Activated CD8-positive, alpha-beta T cell treated with anti-CD3 and anti-CD28 coated beads for 36 hours (primary cell): ENCODE measurements at regions of chr9 and their contacts with region 1.

Region 1: DNA sequence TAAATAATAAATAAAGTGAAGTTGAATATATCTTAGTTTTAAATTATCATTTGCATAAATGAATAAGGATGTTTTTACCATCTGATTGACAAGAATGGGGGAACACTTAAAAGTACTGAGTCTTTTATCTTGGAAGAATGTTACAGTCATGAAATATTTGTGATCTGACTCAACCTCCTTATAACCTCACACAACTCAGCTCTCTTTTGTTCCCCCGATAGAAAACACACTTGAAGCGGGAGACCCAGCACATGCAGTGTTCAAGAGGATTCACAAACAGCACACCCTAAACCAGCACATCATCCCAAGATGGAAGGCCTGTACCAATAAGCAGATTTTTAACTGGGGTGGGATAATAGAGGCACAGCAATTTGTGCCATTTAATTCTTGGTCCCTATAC is 15.5 kb downstream of the BAAT start:
- DNase-seq: no peak
- ATAC-seq: no peak
- H3K4me3 Mint-ChIP-seq: no peak overlapping the region
- H3K27ac Mint-ChIP-seq: no peak overlapping the region
- H3K4me1 Mint-ChIP-seq: no peaks in the 10 kb centered on the region
- H3K27me3 Mint-ChIP-seq: peaks cover 7% of the 10 kb centered on the region
- CTCF ChIP-seq: no peak

Region 2: GRCh38 chr9:101387871-101388506 is 18.7 kb after region 1 on chr9:
- CTCF ChIA-PET with region 1: interaction called, 14 read pairs
- POLR2A ChIA-PET with region 1: no interaction called
- intact Hi-C with region 1: no loop called
- DNase-seq: no peak
- ATAC-seq: peak; percentile 64
- H3K4me3 Mint-ChIP-seq: no peak overlapping the region
- H3K27ac Mint-ChIP-seq: peak overlapping the region; percentile 49
- H3K4me1 Mint-ChIP-seq: peaks cover 22% of the 10 kb centered on the region
- H3K27me3 Mint-ChIP-seq: no peaks in the 10 kb centered on the region
- CTCF ChIP-seq: peak; percentile 49